SK-N-SH (cell line): ENCODE measurements at regions of chr17 and their contacts with region 1.

Region 1: GRCh38 chr17:43338886-43339516 is 59.8 kb upstream of the ARL4D start:
- DNase-seq: no peak
- H3K4me3 ChIP-seq: no peak overlapping the region
- H3K27ac ChIP-seq: no peak overlapping the region
- H3K4me1 ChIP-seq: peaks cover 4 to 11% of the 10 kb centered on the region in 2 experiments; a peak in 2 of 4 replicates
- H3K27me3 ChIP-seq: no peaks in the 10 kb centered on the region
- CTCF ChIP-seq: peak; percentile 67
- EP300 ChIP-seq: no peak
- RAD21 ChIP-seq: peak; percentile 78

Region 2: GRCh38 chr17:43094129-43094835 is 244.7 kb before region 1 on chr17:
- CTCF ChIA-PET with region 1: no interaction called
- POLR2A ChIA-PET with region 1: no interaction called
- DNase-seq: no peak
- H3K4me3 ChIP-seq: no peak overlapping the region
- H3K27ac ChIP-seq: peak overlapping the region in 1 of 2 experiments; percentile 32; a peak in 2 of 4 replicates
- H3K4me1 ChIP-seq: no peaks in the 10 kb centered on the region
- H3K27me3 ChIP-seq: no peaks in the 10 kb centered on the region
- CTCF ChIP-seq: no peak
- EP300 ChIP-seq: no peak
- RAD21 ChIP-seq: no peak

Region 3: DNA sequence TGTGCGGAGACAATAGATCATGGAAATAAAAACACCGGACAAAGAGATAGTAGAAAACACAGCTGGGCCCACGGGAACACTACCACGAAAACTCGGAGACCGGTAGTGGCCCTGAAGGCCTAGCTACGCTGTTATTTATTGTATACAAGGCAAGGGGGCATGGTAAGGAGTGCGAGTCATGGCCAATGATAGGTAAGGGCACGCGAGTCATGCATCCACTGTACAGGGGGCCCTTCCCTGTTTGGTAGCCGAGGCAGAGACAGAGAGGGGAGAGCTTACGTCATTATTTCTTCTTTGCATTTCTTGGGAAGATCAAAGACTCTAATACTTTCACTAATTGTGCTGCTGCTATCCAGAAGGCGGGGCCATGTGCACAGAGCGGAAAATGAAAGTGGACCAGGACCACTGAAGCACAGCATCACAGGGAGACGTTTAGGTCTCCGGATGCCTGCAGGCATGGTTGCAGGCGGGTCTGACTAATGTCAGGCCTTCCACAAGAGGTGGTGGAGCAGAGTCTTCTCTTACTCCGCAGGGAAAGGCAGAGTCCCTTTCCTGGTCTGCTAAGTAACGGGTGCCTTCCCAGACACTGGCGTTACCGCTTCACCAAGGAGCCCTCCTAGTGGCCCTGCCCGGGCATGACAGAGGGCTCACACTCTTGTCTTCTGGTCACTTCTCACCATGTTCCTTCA is 14.7 kb before region 1 on chr17:
- CTCF ChIA-PET with region 1: interaction called, 14 read pairs
- POLR2A ChIA-PET with region 1: no interaction called
- DNase-seq: no peak
- H3K4me3 ChIP-seq: no peak overlapping the region
- H3K27ac ChIP-seq: no peak overlapping the region
- H3K4me1 ChIP-seq: no peaks in the 10 kb centered on the region; a peak in 1 of 4 replicates
- H3K27me3 ChIP-seq: no peaks in the 10 kb centered on the region
- CTCF ChIP-seq: no peak
- EP300 ChIP-seq: no peak
- RAD21 ChIP-seq: no peak

Region 4: GRCh38 chr17:43352579-43353331 is 13.8 kb after region 1 on chr17:
- CTCF ChIA-PET with region 1: interaction called, 14 read pairs
- POLR2A ChIA-PET with region 1: interaction called, 3 read pairs
- DNase-seq: no peak
- H3K4me3 ChIP-seq: no peak overlapping the region
- H3K27ac ChIP-seq: no peak overlapping the region
- H3K4me1 ChIP-seq: peaks cover 2 to 7% of the 10 kb centered on the region in 2 experiments; a peak in 3 of 4 replicates
- H3K27me3 ChIP-seq: no peaks in the 10 kb centered on the region
- CTCF ChIP-seq: no peak
- EP300 ChIP-seq: no peak
- RAD21 ChIP-seq: no peak

Region 5: GRCh38 chr17:43517615-43518386 is 178.8 kb after region 1 on chr17:
- CTCF ChIA-PET with region 1: no interaction called
- POLR2A ChIA-PET with region 1: no interaction called
- DNase-seq: no peak
- H3K4me3 ChIP-seq: no peak overlapping the region
- H3K27ac ChIP-seq: peak overlapping the region in 1 of 2 experiments; percentile 84; a peak in 2 of 4 replicates
- H3K4me1 ChIP-seq: peaks cover 0 to 21% of the 10 kb centered on the region in 2 experiments; a peak in 2 of 4 replicates
- H3K27me3 ChIP-seq: no peaks in the 10 kb centered on the region
- CTCF ChIP-seq: no peak
- EP300 ChIP-seq: no peak
- RAD21 ChIP-seq: no peak